ENCODE measurements at regions of chr11 and their contacts with region 1.

Region 1: GRCh38 chr11:110327508-110327907 is 31.1 kb upstream of the RDX start:
- DNase-seq: no peak
- H3K4me3 ChIP-seq: peak overlapping the region; percentile 33; the same call in 1 of the 2 replicates
- H3K27ac ChIP-seq: peak overlapping the region; percentile 86
- H3K4me1 ChIP-seq: peaks cover 43% of the 10 kb centered on the region
- H3K27me3 ChIP-seq: no peaks in the 10 kb centered on the region
- CTCF ChIP-seq: no peak

Region 2: GRCh38 chr11:110337570-110338193 is 10.2 kb after region 1 on chr11:
- CTCF ChIA-PET with region 1: no interaction called
- POLR2A ChIA-PET with region 1: no interaction called
- intact Hi-C with region 1: loop called (anchors 1 kb)
- DNase-seq: peak; percentile 73 to 94
- H3K4me3 ChIP-seq: peak overlapping the region; percentile 3; the same call in 1 of the 2 replicates
- H3K27ac ChIP-seq: peak overlapping the region; percentile 70
- H3K4me1 ChIP-seq: peaks cover 14% of the 10 kb centered on the region
- H3K27me3 ChIP-seq: no peaks in the 10 kb centered on the region
- CTCF ChIP-seq: no peak

Measured in PC-9 (cell line).